ENCODE measurements at regions of chr6 and their contacts with region 1.

Region 1: DNA sequence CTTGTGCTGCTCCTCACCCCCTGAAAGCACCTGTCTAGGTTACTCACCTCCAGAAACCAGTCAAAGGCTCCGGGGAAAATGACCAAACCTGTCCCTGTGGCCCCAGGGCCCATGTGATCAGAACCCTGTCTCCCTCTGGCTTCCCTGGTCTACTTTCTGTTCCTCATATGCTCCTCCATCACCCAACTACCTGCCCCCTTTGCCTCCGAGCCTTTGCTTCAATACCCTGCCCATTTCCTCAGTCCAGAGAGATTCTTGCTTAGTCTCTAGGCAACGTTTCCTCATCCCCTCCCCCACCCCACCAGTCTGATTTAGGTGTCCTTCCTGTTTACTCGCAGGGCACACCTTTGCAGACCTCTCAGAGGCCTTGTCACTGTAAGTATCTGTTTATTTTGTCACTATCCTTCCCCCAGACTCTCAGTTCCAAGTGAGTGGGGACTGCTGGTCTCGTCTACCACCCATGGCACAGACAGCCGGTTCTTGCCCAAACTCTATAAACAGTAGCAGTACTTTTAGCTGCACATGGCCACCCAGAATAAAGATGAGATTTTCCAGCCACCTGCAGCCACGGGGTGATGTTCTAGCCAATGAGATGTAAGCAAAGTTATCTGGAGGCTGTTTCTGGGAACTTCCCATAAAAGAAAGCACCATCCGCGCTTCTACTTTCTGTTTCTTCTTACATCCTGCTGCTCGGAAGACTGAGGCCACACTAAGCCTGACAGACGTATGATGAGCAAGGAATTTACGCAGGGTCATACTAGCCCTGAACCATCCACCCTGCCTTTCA is 13.3 kb downstream of the ELOVL5 start:
- DNase-seq: peak; percentile 74
- H3K4me3 Mint-ChIP-seq: peak overlapping the region; percentile 78
- H3K27ac Mint-ChIP-seq: peak overlapping the region; percentile 96
- H3K4me1 Mint-ChIP-seq: peaks cover 89% of the 10 kb centered on the region
- H3K27me3 Mint-ChIP-seq: no peaks in the 10 kb centered on the region

Region 2: GRCh38 chr6:52399511-52400312 is 935.7 kb before region 1 on chr6:
- intact Hi-C with region 1: loop called (anchors 10 kb)
- DNase-seq: no peak
- H3K4me3 Mint-ChIP-seq: peak overlapping the region; percentile 42
- H3K27ac Mint-ChIP-seq: peak overlapping the region; percentile 38
- H3K4me1 Mint-ChIP-seq: peaks cover 52% of the 10 kb centered on the region
- H3K27me3 Mint-ChIP-seq: peaks cover 5% of the 10 kb centered on the region

Region 3: GRCh38 chr6:52984247-52984646 is 351.2 kb before region 1 on chr6:
- intact Hi-C with region 1: loop called (anchors 2 kb)
- DNase-seq: peak; percentile 47
- H3K4me3 Mint-ChIP-seq: peak overlapping the region; percentile 44
- H3K27ac Mint-ChIP-seq: peak overlapping the region; percentile 78
- H3K4me1 Mint-ChIP-seq: peaks cover 71% of the 10 kb centered on the region
- H3K27me3 Mint-ChIP-seq: peaks cover 6% of the 10 kb centered on the region

Region 4: GRCh38 chr6:53309059-53309900 is 26.1 kb before region 1 on chr6:
- intact Hi-C with region 1: loop called (anchors 1 kb)
- DNase-seq: no peak
- H3K4me3 Mint-ChIP-seq: no peak overlapping the region
- H3K27ac Mint-ChIP-seq: peak overlapping the region; percentile 27
- H3K4me1 Mint-ChIP-seq: peaks cover 83% of the 10 kb centered on the region
- H3K27me3 Mint-ChIP-seq: no peaks in the 10 kb centered on the region

Region 5: GRCh38 chr6:53322188-53323029 is 13.0 kb before region 1 on chr6:
- intact Hi-C with region 1: loop called (anchors 1 kb)
- DNase-seq: no peak
- H3K4me3 Mint-ChIP-seq: no peak overlapping the region
- H3K27ac Mint-ChIP-seq: no peak overlapping the region
- H3K4me1 Mint-ChIP-seq: peaks cover 47% of the 10 kb centered on the region
- H3K27me3 Mint-ChIP-seq: no peaks in the 10 kb centered on the region

Region 6: GRCh38 chr6:53359072-53359842 is 23.9 kb after region 1 on chr6:
- intact Hi-C with region 1: loop called (anchors 1 kb)
- DNase-seq: peak; percentile 93
- H3K4me3 Mint-ChIP-seq: peak overlapping the region; percentile 92
- H3K27ac Mint-ChIP-seq: peak overlapping the region; percentile 100
- H3K4me1 Mint-ChIP-seq: peaks cover 50% of the 10 kb centered on the region
- H3K27me3 Mint-ChIP-seq: peaks cover 5% of the 10 kb centered on the region

Region 7: DNA sequence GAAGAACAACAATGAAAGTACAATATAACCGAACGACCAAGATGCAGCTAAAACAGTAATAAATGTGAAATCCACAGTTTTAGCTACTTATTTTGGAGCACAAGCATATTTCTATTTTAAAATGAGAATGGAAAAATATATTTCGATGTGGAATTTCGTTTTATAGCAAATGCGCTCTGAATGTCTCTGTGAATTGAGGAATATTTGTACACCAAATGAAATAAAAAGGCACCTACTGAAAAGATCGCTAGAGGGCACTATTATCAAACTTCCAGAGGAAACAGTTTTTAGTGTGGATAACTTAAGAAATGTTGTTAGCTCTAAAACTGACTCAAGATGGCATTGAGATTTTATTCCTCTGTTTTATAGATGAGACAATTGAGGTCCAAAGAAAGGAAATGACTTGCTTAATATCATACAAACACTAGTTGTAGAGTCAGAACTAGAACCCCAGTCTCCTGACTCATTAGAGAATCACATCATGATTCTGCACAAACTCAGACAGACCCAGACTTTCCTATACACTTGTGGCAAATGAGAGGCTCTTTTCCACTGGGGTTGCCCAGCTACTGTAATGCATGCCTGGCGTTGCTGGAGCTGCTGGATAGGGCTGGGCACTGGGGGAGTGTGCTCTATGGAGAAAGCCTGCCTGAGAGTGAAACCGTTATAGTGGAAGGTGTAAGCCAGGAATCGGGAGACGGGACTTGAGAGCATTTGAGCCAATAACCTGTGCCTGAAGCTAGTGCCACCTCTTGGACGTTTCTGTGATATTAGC is 157.6 kb after region 1 on chr6:
- intact Hi-C with region 1: loop called (anchors 1 kb)
- DNase-seq: no peak
- H3K4me3 Mint-ChIP-seq: no peak overlapping the region
- H3K27ac Mint-ChIP-seq: peak overlapping the region; percentile 25
- H3K4me1 Mint-ChIP-seq: peaks cover 15% of the 10 kb centered on the region
- H3K27me3 Mint-ChIP-seq: peaks cover 22% of the 10 kb centered on the region

Measured in activated T-helper 1 cell treated with anti-CD3 and anti-CD28 coated beads, Interleukin-12 subunit alpha, Interleukin-12 subunit beta, Interleukin-2, Interleukin-4 antibody, amounts not matched to agents 30 ng/mL and 10 ng/mL and 1 ng/mL, durations not matched to agents 14 hours and 24 hours and 36 hours (primary cell).